ENCODE measurements at regions of chr2 and their contacts with region 1.

Region 1: GRCh38 chr2:195318440-195319111 is 338.4 kb upstream of the SLC39A10 start:
- DNase-seq: peak; percentile 44
- H3K4me3 ChIP-seq: peak overlapping the region in 1 of 3 experiments; percentile 13
- H3K27ac ChIP-seq: peak overlapping the region; percentile 88
- H3K4me1 ChIP-seq: peaks cover 46% of the 10 kb centered on the region
- H3K27me3 ChIP-seq: no peaks in the 10 kb centered on the region
- CTCF ChIP-seq: peak; percentile 45 to 56

Region 2: GRCh38 chr2:194545978-194546377 is 772.6 kb before region 1 on chr2:
- CTCF ChIA-PET with region 1: no interaction called
- dilution Hi-C with region 1: no loop called
- in situ Hi-C with region 1: loop called (anchors 25 kb)
- intact Hi-C with region 1: loop called (anchors 1 kb)
- DNase-seq: no peak
- H3K4me3 ChIP-seq: no peak overlapping the region
- H3K27ac ChIP-seq: no peak overlapping the region
- H3K4me1 ChIP-seq: no peaks in the 10 kb centered on the region
- H3K27me3 ChIP-seq: no peaks in the 10 kb centered on the region
- CTCF ChIP-seq: peak in 1 of 2 donors; percentile 30

Region 3: DNA sequence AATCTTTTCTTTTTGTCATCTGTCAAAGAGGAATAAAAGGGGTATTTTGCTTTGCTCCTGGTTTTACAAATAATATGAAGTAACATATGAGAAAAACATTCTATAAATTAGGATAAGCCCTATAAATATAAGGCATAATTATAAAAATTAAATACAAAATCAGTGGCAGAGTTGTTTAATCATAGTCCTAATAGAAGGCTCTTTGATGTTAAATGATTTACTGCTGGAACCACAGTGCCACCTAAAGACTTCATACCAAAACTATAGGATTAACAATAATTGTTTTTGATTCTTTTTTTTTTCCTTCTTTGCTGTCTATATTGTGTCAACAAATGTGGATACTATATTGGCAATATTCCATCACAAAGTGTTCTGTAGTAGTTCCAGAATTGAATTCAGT is 499.2 kb before region 1 on chr2:
- CTCF ChIA-PET with region 1: no interaction called
- dilution Hi-C with region 1: no loop called
- in situ Hi-C with region 1: no loop called
- intact Hi-C with region 1: loop called (anchors 5 kb)
- DNase-seq: peak; percentile 6
- H3K4me3 ChIP-seq: no peak overlapping the region
- H3K27ac ChIP-seq: no peak overlapping the region
- H3K4me1 ChIP-seq: peaks cover 13% of the 10 kb centered on the region
- H3K27me3 ChIP-seq: no peaks in the 10 kb centered on the region
- CTCF ChIP-seq: peak; percentile 13 to 49

Region 4: DNA sequence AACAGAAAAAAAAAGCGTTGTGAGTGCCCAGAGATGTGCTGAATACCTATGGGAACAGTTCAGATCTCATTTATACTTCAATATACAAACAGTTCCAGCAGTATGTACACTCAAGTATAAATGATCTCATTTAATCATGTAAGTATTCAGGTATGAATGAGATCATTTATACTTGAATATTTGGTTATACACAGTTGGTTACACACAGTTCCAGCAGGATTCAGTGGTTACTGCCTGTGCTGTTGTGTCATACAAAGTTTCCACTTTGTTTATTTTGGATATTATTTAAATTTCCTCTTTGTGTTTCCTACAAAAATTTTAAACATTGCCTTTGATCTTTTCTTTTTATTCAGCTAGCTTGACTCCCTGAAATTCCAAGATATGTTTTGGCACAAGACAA is 44.9 kb after region 1 on chr2:
- CTCF ChIA-PET with region 1: no interaction called
- dilution Hi-C with region 1: no loop called
- in situ Hi-C with region 1: no loop called
- intact Hi-C with region 1: loop called (anchors 2 kb)
- DNase-seq: peak; percentile 63
- H3K4me3 ChIP-seq: no peak overlapping the region
- H3K27ac ChIP-seq: peak overlapping the region; percentile 81
- H3K4me1 ChIP-seq: peaks cover 11% of the 10 kb centered on the region
- H3K27me3 ChIP-seq: no peaks in the 10 kb centered on the region
- CTCF ChIP-seq: no peak

Region 5: GRCh38 chr2:195642027-195642676 is 323.6 kb after region 1 on chr2:
- CTCF ChIA-PET with region 1: no interaction called
- dilution Hi-C with region 1: no loop called
- in situ Hi-C with region 1: no loop called
- intact Hi-C with region 1: no loop called
- DNase-seq: no peak
- H3K4me3 ChIP-seq: no peak overlapping the region
- H3K27ac ChIP-seq: no peak overlapping the region
- H3K4me1 ChIP-seq: peaks cover under 1% of the 10 kb centered on the region
- H3K27me3 ChIP-seq: no peaks in the 10 kb centered on the region
- CTCF ChIP-seq: no peak

Region 6: DNA sequence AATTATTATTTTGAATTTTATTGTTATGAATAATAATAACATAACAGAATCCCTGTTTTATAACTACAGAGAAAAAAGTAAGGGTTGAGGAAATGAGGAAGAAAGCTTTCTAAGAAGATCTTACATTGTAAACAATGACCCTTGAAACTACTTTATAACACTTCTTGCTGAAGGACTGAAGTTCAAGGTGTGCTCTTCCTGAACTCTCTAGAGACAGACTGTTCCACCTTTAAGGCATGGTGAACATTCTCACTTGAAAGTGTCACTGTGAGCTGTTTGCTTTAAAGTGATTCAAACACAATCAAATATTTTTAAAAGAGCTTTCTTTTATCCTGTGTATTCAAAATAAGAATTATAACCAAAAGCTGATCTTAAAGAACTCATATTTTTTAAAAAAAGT is 618.6 kb after region 1 on chr2:
- CTCF ChIA-PET with region 1: no interaction called
- dilution Hi-C with region 1: no loop called
- in situ Hi-C with region 1: loop called in 1 of 2 experiments (anchors 25 kb)
- intact Hi-C with region 1: loop called (anchors 1 kb)
- DNase-seq: no peak
- H3K4me3 ChIP-seq: no peak overlapping the region
- H3K27ac ChIP-seq: no peak overlapping the region
- H3K4me1 ChIP-seq: no peaks in the 10 kb centered on the region
- H3K27me3 ChIP-seq: no peaks in the 10 kb centered on the region
- CTCF ChIP-seq: no peak

Region 7: DNA sequence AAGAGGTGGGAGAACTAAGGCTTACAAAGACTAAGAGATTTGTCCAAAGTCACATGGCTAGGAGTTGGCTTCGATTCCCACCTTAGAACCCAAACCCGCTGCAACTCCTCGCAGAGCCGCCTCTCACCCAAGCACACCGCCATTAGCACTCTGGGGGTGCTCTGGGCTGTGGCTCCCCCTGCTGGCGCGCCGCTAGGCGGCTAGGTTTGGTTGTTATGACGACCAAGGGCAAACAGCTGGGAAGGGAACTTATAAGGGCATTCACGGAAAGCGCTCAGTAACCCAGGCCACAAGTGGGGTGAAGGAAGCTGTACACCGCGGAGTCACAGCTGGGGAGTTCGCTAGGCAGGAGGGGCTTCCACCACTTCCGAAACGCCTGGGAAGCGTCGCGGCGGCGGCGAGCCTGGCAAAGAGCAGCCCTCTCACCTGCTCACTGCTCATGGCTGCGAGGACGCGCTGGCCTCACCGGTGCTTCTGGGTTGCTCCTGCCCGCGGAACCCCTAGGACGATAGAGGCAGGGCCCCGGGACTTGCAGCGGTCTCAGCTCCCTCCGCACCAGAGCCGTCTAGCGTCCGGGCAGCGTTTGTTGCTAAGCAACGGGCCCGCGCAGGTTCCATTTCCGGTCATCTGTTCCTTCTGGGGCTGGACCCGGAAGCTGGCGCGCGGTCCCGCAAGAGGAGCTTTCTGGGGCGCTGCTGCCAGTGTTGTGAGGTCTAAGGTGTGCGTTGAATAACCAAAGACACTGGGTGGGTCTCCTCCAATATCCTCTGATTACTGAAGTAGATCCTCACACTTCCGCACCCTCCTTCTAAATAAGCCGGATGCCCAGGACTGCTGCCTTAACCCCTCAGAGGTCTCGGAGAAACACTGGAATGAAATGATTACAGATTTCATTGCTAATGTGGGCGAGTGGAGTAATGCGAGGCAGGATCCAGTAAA is 750.0 kb after region 1 on chr2 and contains the start of gene DNAH7:
- CTCF ChIA-PET with region 1: no interaction called
- dilution Hi-C with region 1: no loop called
- in situ Hi-C with region 1: loop called in 1 of 2 experiments (anchors 25 kb)
- intact Hi-C with region 1: loop called (anchors 5 kb)
- DNase-seq: peak; percentile 71
- H3K4me3 ChIP-seq: peak within 1 kb of the TSS; percentile 79 to 83 (median 81)
- H3K27ac ChIP-seq: peak within 1 kb of the TSS; percentile 97
- H3K4me1 ChIP-seq: peaks cover 3% of the 10 kb centered on the region
- H3K27me3 ChIP-seq: no peaks in the 10 kb centered on the region
- CTCF ChIP-seq: peak; percentile 98 to 99
- total RNA-seq, gene DNAH7: 0.56 to 1.0 TPM